Caco-2 (cell line): ENCODE measurements at regions of chr17 and their contacts with region 1.

Region 1: GRCh38 chr17:61927200-61928165 is at the start of gene INTS2:
- DNase-seq: peak; percentile 95 to 97
- H3K4me3 ChIP-seq: peak within 1 kb of the TSS; percentile 67
- H3K4me3 Mint-ChIP-seq: peak within 1 kb of the TSS; percentile 97
- H3K27ac Mint-ChIP-seq: peak within 1 kb of the TSS; percentile 94
- H3K4me1 ChIP-seq: no peaks in the 10 kb centered on the region
- H3K4me1 Mint-ChIP-seq: no peaks in the 10 kb centered on the region
- H3K27me3 ChIP-seq: no peaks in the 10 kb centered on the region
- H3K27me3 Mint-ChIP-seq: no peaks in the 10 kb centered on the region
- CTCF ChIP-seq: no peak
- total RNA-seq, gene INTS2: 20.1 and 20.8 TPM in 2 replicates

Region 2: GRCh38 chr17:61635913-61636432 is 291.5 kb before region 1 on chr17:
- CTCF ChIA-PET with region 1: no interaction called
- POLR2A ChIA-PET with region 1: no interaction called
- intact Hi-C with region 1: loop called (anchors 5 kb)
- DNase-seq: peak; percentile 55 to 67
- H3K4me3 ChIP-seq: no peak overlapping the region
- H3K4me3 Mint-ChIP-seq: no peak overlapping the region
- H3K27ac Mint-ChIP-seq: no peak overlapping the region
- H3K4me1 ChIP-seq: no peaks in the 10 kb centered on the region
- H3K4me1 Mint-ChIP-seq: no peaks in the 10 kb centered on the region
- H3K27me3 ChIP-seq: no peaks in the 10 kb centered on the region
- H3K27me3 Mint-ChIP-seq: peaks cover 29% of the 10 kb centered on the region
- CTCF ChIP-seq: peak; percentile 82 to 86

Region 3: DNA sequence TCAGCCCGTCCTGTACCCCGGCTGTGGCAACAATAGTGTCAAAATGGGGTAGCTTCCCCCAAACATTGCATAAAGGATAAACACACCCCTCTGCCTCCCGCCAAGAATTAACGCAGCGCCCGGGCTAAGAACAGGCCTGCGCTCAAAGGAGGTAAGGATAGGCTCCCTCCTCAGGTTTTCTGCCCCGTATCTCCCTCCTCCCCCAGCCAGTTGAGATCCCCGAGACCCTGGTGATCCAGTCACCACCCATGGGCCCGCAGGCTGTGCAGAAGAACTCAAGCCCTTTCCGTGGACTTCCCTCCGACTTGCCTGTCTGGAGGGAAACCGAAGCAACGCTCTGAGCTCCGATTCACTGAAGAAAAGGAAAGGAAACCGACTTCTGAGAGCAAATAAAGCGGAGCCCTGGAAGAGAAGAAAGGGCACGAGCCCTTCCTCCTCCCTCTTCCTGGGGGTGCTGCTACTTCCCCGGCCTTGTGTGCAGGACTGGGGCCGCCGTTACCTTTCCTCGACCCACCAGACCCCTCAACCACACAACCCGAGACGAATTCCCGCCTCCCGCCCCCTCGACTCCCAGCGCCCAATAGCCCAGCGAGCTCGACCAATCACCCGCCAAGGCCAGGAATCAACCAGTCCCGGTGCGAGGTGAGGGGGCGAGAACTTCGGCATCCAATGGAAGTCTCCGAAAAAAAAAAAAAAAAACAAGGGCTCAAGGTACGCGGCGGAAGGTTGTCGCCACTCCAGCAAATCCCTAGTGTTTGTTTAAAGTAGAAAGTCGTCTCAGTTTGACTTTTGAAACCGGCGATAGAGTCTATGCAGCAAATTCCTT is 64.3 kb before region 1 on chr17 and contains the start of gene BRIP1:
- CTCF ChIA-PET with region 1: interaction called, 6 read pairs
- POLR2A ChIA-PET with region 1: no interaction called
- intact Hi-C with region 1: loop called (anchors 5 kb)
- DNase-seq: peak; percentile 95 to 97
- H3K4me3 ChIP-seq: peak within 1 kb of the TSS; percentile 76
- H3K4me3 Mint-ChIP-seq: peak within 1 kb of the TSS; percentile 97
- H3K27ac Mint-ChIP-seq: peak within 1 kb of the TSS; percentile 97
- H3K4me1 ChIP-seq: peaks cover 20% of the 10 kb centered on the region
- H3K4me1 Mint-ChIP-seq: peaks cover 11% of the 10 kb centered on the region
- H3K27me3 ChIP-seq: no peaks in the 10 kb centered on the region
- H3K27me3 Mint-ChIP-seq: no peaks in the 10 kb centered on the region
- CTCF ChIP-seq: no peak
- total RNA-seq, gene BRIP1: 17.3 and 18.3 TPM in 2 replicates

Region 4: DNA sequence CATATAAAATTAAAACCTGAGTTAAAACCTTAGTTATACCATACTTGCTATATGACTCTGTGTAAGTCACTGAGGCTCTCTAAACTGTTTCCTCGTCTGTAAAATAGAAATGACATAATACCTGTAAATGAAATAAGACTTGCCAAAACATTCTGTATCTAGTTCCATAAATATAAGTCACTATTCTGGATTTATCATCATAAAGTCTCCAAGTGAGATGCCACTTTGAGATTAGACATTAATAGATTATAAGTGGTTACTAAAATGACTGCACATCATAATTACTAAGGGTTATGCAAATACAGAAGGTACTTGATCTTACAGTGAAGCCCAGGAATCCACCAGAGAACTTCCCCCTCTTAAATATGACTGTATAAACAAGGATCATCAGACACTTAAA is 52.2 kb before region 1 on chr17:
- CTCF ChIA-PET with region 1: no interaction called
- POLR2A ChIA-PET with region 1: no interaction called
- intact Hi-C with region 1: no loop called
- DNase-seq: no peak
- H3K4me3 ChIP-seq: no peak overlapping the region
- H3K4me3 Mint-ChIP-seq: no peak overlapping the region
- H3K27ac Mint-ChIP-seq: no peak overlapping the region
- H3K4me1 ChIP-seq: no peaks in the 10 kb centered on the region
- H3K4me1 Mint-ChIP-seq: peaks cover 10% of the 10 kb centered on the region
- H3K27me3 ChIP-seq: no peaks in the 10 kb centered on the region
- H3K27me3 Mint-ChIP-seq: no peaks in the 10 kb centered on the region
- CTCF ChIP-seq: no peak

Region 5: DNA sequence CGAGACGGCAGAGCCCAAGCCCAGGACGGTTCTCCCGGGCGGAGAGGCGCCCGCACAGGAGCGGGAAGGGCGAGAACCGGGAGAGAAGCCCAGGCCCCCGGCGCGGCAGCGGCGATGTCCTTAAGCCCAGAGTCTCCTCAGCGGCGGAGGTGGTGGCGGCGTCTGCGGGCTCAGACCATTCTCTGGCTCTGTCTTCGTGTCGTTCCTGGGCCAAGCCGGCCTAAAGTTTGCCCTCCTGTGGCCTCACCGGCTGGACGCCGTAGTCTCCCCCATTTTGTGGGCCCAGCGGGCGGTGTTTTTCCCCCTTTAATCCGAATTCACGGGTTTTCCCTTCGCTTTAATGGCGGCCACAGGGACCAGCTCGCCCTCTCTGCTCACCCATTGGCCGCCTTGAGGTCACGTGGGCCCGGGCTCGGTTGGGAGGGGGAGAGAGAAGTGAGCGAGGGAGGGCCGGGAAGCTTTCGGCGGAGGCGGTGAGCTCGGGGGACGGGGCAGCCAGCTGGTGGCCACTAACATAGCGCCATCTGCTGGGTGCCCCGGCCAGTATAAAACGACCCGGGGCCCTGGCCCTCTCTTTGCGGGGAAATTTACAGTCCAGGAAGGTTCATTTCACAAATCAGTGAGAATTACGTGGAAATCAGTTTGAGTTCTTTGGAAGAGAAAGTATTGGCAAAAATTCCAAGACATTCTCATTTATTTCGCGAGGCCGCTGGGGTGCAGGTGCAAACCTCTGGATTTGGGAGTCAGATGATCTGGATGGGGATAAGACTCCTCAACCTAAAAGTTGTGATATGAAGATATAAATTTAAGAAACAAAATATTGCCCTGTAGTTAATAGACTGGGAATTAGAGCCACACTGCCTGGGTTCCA is 138.3 kb after region 1 on chr17:
- CTCF ChIA-PET with region 1: no interaction called
- POLR2A ChIA-PET with region 1: no interaction called
- intact Hi-C with region 1: loop called (anchors 10 kb)
- DNase-seq: peak; percentile 99
- H3K4me3 ChIP-seq: peak overlapping the region; percentile 75
- H3K4me3 Mint-ChIP-seq: peak overlapping the region; percentile 91
- H3K27ac Mint-ChIP-seq: peak overlapping the region; percentile 98
- H3K4me1 ChIP-seq: peaks cover 16% of the 10 kb centered on the region
- H3K4me1 Mint-ChIP-seq: peaks cover 26% of the 10 kb centered on the region
- H3K27me3 ChIP-seq: no peaks in the 10 kb centered on the region
- H3K27me3 Mint-ChIP-seq: no peaks in the 10 kb centered on the region
- CTCF ChIP-seq: peak; percentile 93

Region 6: GRCh38 chr17:62164763-62165753 is 237.6 kb after region 1 on chr17:
- CTCF ChIA-PET with region 1: no interaction called
- POLR2A ChIA-PET with region 1: no interaction called
- intact Hi-C with region 1: no loop called
- DNase-seq: peak; percentile 63 to 67
- H3K4me3 ChIP-seq: no peak overlapping the region
- H3K4me3 Mint-ChIP-seq: peak overlapping the region; percentile 60
- H3K27ac Mint-ChIP-seq: peak overlapping the region; percentile 73
- H3K4me1 ChIP-seq: peaks cover 53% of the 10 kb centered on the region
- H3K4me1 Mint-ChIP-seq: peaks cover 40% of the 10 kb centered on the region
- H3K27me3 ChIP-seq: no peaks in the 10 kb centered on the region
- H3K27me3 Mint-ChIP-seq: no peaks in the 10 kb centered on the region
- CTCF ChIP-seq: no peak